ENCODE measurements at regions of chr14 and their contacts with region 1.

Region 1: DNA sequence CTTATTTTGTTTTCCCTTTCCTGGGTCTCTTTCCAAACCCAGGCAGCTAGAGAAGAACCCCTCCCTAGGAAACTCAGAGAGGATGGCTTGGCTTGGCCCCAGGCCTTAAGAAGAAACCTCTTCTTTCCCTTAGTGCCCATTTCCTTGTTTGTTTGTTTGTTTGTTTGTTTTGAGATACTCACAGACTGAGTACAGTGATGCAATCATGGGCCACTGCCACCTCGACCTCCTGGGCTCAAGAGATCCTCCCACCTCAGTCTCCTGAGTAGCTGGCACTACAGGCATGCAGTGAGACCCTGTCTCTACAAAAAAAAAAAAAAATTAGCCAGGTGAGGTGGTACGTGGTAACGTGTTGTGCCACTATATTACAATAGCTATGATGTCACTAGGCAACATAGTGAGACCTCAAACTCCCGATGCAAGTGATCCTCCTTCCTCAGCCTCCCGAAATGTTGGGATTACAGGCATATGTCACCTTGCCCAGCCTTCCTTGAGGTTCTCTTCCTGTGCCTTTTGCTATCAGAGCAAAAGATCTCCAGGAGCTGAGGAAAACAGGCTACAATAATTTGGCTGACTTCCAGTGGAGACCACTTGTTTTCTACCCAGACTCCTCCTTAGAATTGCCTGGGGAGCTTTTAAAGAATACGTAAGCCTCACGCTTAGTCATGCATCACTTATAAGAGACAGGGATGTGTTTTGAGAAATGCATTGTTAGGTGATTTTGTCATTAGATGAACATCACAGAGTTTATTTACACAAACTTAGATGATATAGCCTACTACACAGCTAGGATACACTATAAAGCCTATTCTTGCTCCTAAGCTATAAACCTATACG is 34.5 kb upstream of the LGALS3 start:
- DNase-seq: no peak

Region 2: DNA sequence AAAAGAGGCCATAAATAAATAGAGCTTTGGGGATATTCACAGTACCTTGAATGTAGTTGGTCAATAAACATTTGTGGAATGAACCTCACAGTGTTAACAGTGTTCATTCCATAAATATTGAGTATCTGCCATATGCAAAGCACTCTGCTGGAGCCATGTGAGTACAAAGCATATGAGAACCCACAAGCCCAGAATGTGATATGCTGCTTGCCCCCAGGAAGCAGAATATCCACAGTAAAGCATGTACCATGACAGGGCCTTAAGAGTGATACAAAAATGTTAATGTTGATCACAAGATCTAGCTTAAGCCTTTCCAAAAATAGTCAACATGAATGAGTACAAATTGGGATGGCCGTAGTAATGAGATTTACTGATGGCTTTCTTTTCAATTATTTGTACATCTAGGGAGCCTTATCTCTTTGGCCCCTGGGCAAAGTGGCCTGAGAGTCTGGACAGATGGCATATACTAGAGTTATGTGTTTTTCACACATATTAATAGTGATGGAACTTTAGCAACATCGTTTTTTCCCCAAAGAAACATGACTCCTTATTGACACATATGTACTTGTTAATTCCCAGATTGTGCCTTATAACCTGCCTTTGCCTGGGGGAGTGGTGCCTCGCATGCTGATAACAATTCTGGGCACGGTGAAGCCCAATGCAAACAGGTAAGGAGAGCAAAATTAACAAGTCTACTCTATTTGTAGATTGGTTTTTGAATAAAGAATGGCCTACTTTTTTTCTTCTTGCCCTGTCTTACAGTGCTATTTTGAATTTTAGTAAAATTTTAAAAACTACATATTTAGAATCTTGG is 45.4 kb after region 1 on chr14:
- intact Hi-C with region 1: no loop called
- DNase-seq: no peak

Region 3: DNA sequence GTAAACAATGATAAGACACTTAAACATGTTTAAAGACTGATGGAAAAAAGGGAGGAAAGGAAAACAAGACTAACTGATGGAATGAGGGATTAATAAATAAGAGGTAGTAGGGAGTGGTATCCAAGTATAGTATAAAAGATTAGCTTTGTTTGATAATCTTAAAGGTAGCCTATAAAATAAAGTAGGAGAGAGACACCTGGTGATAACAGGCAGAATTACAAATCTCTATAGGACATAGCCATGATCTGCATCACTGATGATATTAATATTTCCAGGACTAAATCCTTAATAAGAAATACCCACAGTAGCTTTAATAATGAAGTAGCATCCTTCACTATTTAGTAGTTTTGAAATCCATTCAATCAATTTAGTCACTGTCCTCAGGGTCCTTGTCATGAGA is 66.5 kb after region 1 on chr14:
- intact Hi-C with region 1: loop called (anchors 1 kb)
- DNase-seq: no peak

Region 4: GRCh38 chr14:55416866-55417265 is 322.3 kb after region 1 on chr14:
- intact Hi-C with region 1: no loop called
- DNase-seq: no peak

Measured in cardiac septum (tissue), 1 donor.